CD4-positive, alpha-beta T cell (primary cell): ENCODE measurements at regions of chr1 and their contacts with region 1.

Region 1: DNA sequence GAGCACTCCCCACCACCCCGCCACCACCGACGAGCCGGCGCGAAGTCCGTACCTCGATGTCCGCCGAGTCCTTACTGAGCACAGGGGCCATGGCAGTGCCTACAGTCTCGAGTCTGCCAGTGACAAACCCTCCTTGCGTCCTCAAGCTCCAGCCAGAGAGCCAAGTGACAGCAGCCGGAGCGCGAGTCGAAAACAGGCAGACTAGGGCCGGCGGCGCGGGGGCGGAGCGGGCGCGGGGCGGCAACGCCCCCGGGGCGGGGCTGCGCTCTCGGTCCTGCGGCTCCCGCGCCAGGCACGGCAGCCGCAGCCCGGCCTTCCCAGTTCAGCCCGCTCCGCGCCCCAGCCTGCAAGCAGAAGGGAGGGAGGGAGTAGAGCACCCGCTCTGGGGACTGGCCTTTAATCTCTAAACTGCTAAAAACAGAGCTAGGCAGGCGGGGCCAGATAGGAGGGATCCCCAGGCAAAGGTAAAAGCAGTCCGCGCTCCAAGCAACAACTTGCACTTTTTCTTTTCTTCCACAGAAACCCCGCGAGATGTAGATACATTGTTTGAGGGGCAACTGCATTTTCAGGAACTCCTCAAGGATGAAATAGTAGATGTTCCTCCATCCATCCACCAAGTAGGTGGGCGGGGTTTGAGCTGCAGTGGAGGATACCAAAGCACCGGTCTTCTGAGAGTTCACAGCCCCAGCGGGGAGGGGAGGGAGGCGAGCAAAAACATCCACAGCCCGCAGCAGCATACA is at the start of gene DPYD:
- DNase-seq: peak; percentile 71 to 92 (median 82)
- ATAC-seq: peak; percentile 85
- H3K4me3 ChIP-seq: peak within 1 kb of the TSS; percentile 89
- H3K4me3 Mint-ChIP-seq: peak within 1 kb of the TSS; percentile 99
- H3K27ac ChIP-seq: peak within 1 kb of the TSS; percentile 75 to 88
- H3K27ac Mint-ChIP-seq: peak within 1 kb of the TSS; percentile 97
- H3K4me1 ChIP-seq: peaks cover 6% of the 10 kb centered on the region
- H3K4me1 Mint-ChIP-seq: peaks cover 62% of the 10 kb centered on the region
- H3K27me3 ChIP-seq: no peaks in the 10 kb centered on the region
- H3K27me3 Mint-ChIP-seq: no peaks in the 10 kb centered on the region
- CTCF ChIP-seq: no peak
- total RNA-seq, gene DPYD: 34.4 to 35.9 TPM

Region 2: DNA sequence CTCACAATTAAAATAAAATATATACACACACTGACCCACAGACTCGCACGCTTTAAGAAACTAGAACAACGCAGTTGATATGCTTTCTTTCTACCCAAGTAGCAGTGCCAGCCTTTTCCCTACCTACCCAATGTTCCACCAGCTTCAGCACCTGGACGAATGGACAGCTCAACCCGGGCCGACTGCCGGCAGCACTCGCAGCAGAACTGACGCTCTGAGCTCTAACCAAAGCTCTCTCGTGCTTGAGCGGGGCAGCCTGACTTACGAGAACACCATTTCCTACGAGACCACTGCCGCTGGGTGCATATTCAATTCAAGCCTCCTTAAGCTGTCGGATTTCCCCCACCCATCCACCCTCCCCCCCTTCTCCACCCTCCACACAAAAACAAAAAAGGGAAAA is 127.2 kb after region 1 on chr1:
- CTCF ChIA-PET with region 1: no interaction called
- POLR2A ChIA-PET with region 1: interaction called, 10 read pairs
- intact Hi-C with region 1: no loop called
- DNase-seq: peak; percentile 38 to 83 (median 57)
- ATAC-seq: peak; percentile 81
- H3K4me3 ChIP-seq: no peak overlapping the region
- H3K4me3 Mint-ChIP-seq: peak overlapping the region; percentile 7
- H3K27ac ChIP-seq: no peak overlapping the region
- H3K27ac Mint-ChIP-seq: no peak overlapping the region
- H3K4me1 ChIP-seq: peaks cover 38% of the 10 kb centered on the region
- H3K4me1 Mint-ChIP-seq: peaks cover 47% of the 10 kb centered on the region
- H3K27me3 ChIP-seq: peaks cover 54 to 97% of the 10 kb centered on the region in 2 experiments
- H3K27me3 Mint-ChIP-seq: peaks cover 94% of the 10 kb centered on the region
- CTCF ChIP-seq: no peak

Region 3: DNA sequence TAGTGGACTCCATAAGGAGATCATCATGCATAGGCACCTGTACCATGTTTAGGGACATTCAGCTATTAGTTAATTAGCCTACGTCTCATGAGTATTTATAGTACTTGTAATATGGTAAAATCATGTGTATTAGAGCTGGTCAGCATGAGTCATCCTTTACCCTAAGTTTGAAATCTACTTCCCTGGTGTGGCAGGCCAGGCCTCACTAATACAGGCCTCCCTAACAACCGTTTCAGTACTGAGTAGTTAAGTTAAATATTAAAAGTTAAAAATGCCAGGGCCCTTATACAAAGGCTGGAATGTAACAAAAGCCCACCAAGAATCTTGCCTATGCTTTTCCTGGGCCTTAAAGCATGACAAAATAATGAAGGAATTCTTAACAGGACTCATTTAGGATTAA is 356.1 kb after region 1 on chr1:
- CTCF ChIA-PET with region 1: no interaction called
- POLR2A ChIA-PET with region 1: no interaction called
- intact Hi-C with region 1: no loop called
- DNase-seq: no peak
- ATAC-seq: no peak
- H3K4me3 ChIP-seq: no peak overlapping the region
- H3K4me3 Mint-ChIP-seq: no peak overlapping the region
- H3K27ac ChIP-seq: no peak overlapping the region
- H3K27ac Mint-ChIP-seq: no peak overlapping the region
- H3K4me1 ChIP-seq: no peaks in the 10 kb centered on the region
- H3K4me1 Mint-ChIP-seq: no peaks in the 10 kb centered on the region
- H3K27me3 ChIP-seq: no peaks in the 10 kb centered on the region
- H3K27me3 Mint-ChIP-seq: no peaks in the 10 kb centered on the region
- CTCF ChIP-seq: no peak